ENCODE measurements at regions of chr6 and their contacts with region 1.

Region 1: GRCh38 chr6:35688581-35689322 is at the start of gene FKBP5:
- DNase-seq: peak; percentile 73 to 94 (median 83)
- ATAC-seq: peak; percentile 88
- H3K4me3 ChIP-seq: peak within 1 kb of the TSS; percentile 98
- H3K4me3 Mint-ChIP-seq: peak within 1 kb of the TSS; percentile 99
- H3K27ac ChIP-seq: peak within 1 kb of the TSS; percentile 64 to 67
- H3K27ac Mint-ChIP-seq: peak within 1 kb of the TSS; percentile 91
- H3K4me1 ChIP-seq: peaks cover 22% of the 10 kb centered on the region
- H3K4me1 Mint-ChIP-seq: peaks cover 19% of the 10 kb centered on the region
- H3K27me3 ChIP-seq: no peaks in the 10 kb centered on the region
- H3K27me3 Mint-ChIP-seq: no peaks in the 10 kb centered on the region
- CTCF ChIP-seq: no peak
- total RNA-seq, gene FKBP5: 72.6 to 75.9 TPM

Region 2: GRCh38 chr6:35583893-35584688 is 104.7 kb before region 1 on chr6:
- CTCF ChIA-PET with region 1: interaction called, 3 read pairs
- POLR2A ChIA-PET with region 1: interaction called, 7 read pairs
- intact Hi-C with region 1: loop called (anchors 5 kb)
- DNase-seq: peak; percentile 61 to 89 (median 70)
- ATAC-seq: peak; percentile 81
- H3K4me3 ChIP-seq: no peak overlapping the region
- H3K4me3 Mint-ChIP-seq: peak overlapping the region; percentile 69
- H3K27ac ChIP-seq: no peak overlapping the region
- H3K27ac Mint-ChIP-seq: peak overlapping the region; percentile 80
- H3K4me1 ChIP-seq: peaks cover 33% of the 10 kb centered on the region
- H3K4me1 Mint-ChIP-seq: peaks cover 68% of the 10 kb centered on the region
- H3K27me3 ChIP-seq: no peaks in the 10 kb centered on the region
- H3K27me3 Mint-ChIP-seq: no peaks in the 10 kb centered on the region
- CTCF ChIP-seq: peak; percentile 94

Region 3: GRCh38 chr6:35601331-35602132 is 87.2 kb before region 1 on chr6:
- CTCF ChIA-PET with region 1: interaction called, 3 read pairs
- POLR2A ChIA-PET with region 1: interaction called, 25 read pairs
- intact Hi-C with region 1: loop called in 1 of 2 experiments (anchors 5 kb)
- DNase-seq: peak; percentile 50 to 93 (median 64)
- ATAC-seq: peak; percentile 74
- H3K4me3 ChIP-seq: peak overlapping the region; percentile 42
- H3K4me3 Mint-ChIP-seq: peak overlapping the region; percentile 82
- H3K27ac ChIP-seq: peak overlapping the region; percentile 52 to 82
- H3K27ac Mint-ChIP-seq: peak overlapping the region; percentile 85
- H3K4me1 ChIP-seq: peaks cover 70% of the 10 kb centered on the region
- H3K4me1 Mint-ChIP-seq: peaks cover 87% of the 10 kb centered on the region
- H3K27me3 ChIP-seq: no peaks in the 10 kb centered on the region
- H3K27me3 Mint-ChIP-seq: no peaks in the 10 kb centered on the region
- CTCF ChIP-seq: no peak

Region 4: GRCh38 chr6:35640017-35640664 is 48.6 kb before region 1 on chr6:
- CTCF ChIA-PET with region 1: no interaction called
- POLR2A ChIA-PET with region 1: no interaction called
- intact Hi-C with region 1: loop called in 1 of 2 experiments (anchors 5 kb)
- DNase-seq: no peak
- ATAC-seq: no peak
- H3K4me3 ChIP-seq: no peak overlapping the region
- H3K4me3 Mint-ChIP-seq: no peak overlapping the region
- H3K27ac ChIP-seq: no peak overlapping the region
- H3K27ac Mint-ChIP-seq: peak overlapping the region; percentile 81
- H3K4me1 ChIP-seq: peaks cover 9% of the 10 kb centered on the region
- H3K4me1 Mint-ChIP-seq: peaks cover 71% of the 10 kb centered on the region
- H3K27me3 ChIP-seq: no peaks in the 10 kb centered on the region
- H3K27me3 Mint-ChIP-seq: no peaks in the 10 kb centered on the region
- CTCF ChIP-seq: no peak

Region 5: GRCh38 chr6:35669451-35670045 is 19.2 kb before region 1 on chr6:
- CTCF ChIA-PET with region 1: interaction called, 8 read pairs
- POLR2A ChIA-PET with region 1: interaction called, 26 read pairs
- intact Hi-C with region 1: loop called in 1 of 2 experiments (anchors 2 kb)
- DNase-seq: peak in 3 of 14 experiments; percentile 48 to 69 (median 57)
- ATAC-seq: peak; percentile 72
- H3K4me3 ChIP-seq: peak overlapping the region; percentile 25
- H3K4me3 Mint-ChIP-seq: peak overlapping the region; percentile 82
- H3K27ac ChIP-seq: peak overlapping the region; percentile 26 to 58
- H3K27ac Mint-ChIP-seq: peak overlapping the region; percentile 91
- H3K4me1 ChIP-seq: peaks cover 51% of the 10 kb centered on the region
- H3K4me1 Mint-ChIP-seq: peaks cover 57% of the 10 kb centered on the region
- H3K27me3 ChIP-seq: no peaks in the 10 kb centered on the region
- H3K27me3 Mint-ChIP-seq: no peaks in the 10 kb centered on the region
- CTCF ChIP-seq: no peak

Region 6: GRCh38 chr6:35678021-35678654 is 10.6 kb before region 1 on chr6:
- CTCF ChIA-PET with region 1: interaction called, 8 read pairs
- POLR2A ChIA-PET with region 1: interaction called, 13 read pairs
- intact Hi-C with region 1: no loop called
- DNase-seq: no peak
- ATAC-seq: peak; percentile 43
- H3K4me3 ChIP-seq: no peak overlapping the region
- H3K4me3 Mint-ChIP-seq: peak overlapping the region; percentile 53
- H3K27ac ChIP-seq: peak overlapping the region in 1 of 2 donors; percentile 23
- H3K27ac Mint-ChIP-seq: peak overlapping the region; percentile 79
- H3K4me1 ChIP-seq: peaks cover 51% of the 10 kb centered on the region
- H3K4me1 Mint-ChIP-seq: peaks cover 93% of the 10 kb centered on the region
- H3K27me3 ChIP-seq: no peaks in the 10 kb centered on the region
- H3K27me3 Mint-ChIP-seq: no peaks in the 10 kb centered on the region
- CTCF ChIP-seq: no peak

Measured in CD4-positive, alpha-beta T cell (primary cell).